Panc1 (cell line): ENCODE measurements at regions of chr2 and their contacts with region 1.

Region 1: DNA sequence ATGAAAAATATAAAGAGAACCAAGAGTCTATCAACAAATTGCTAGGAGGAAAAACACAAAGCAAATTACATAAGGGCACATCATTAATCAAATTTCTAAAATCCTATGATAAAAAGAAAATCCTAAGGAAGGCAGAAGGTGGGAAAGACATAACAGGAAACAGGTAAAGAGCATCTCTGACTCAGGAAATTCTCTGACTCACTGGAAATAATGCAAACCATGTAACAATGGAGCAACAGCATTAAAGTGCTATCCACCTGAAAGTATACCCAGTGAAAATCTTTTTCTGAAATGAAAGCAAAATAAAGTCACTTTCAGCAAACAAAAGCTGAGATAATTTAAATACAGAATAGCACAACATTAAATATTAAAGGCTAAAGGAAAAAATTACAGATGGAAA is 10.9 kb downstream of the ALK start:
- DNase-seq: no peak
- ATAC-seq: no peak
- H3K4me3 ChIP-seq: no peak overlapping the region
- H3K27ac ChIP-seq: no peak overlapping the region
- H3K4me1 ChIP-seq: no peaks in the 10 kb centered on the region
- H3K27me3 ChIP-seq: no peaks in the 10 kb centered on the region
- CTCF ChIP-seq: no peak

Region 2: GRCh38 chr2:29699045-29699444 is 211.4 kb before region 1 on chr2:
- CTCF ChIA-PET with region 1: interaction called, 10 read pairs
- POLR2A ChIA-PET with region 1: no interaction called
- in situ Hi-C with region 1: no loop called
- intact Hi-C with region 1: no loop called
- DNase-seq: no peak
- ATAC-seq: no peak
- H3K4me3 ChIP-seq: no peak overlapping the region
- H3K27ac ChIP-seq: no peak overlapping the region
- H3K4me1 ChIP-seq: no peaks in the 10 kb centered on the region
- H3K27me3 ChIP-seq: no peaks in the 10 kb centered on the region
- CTCF ChIP-seq: no peak